ENCODE measurements at regions of chr17 and their contacts with region 1.

Region 1: GRCh38 chr17:55533608-55534007 is 22.4 kb upstream of the SMIM36 start:
- DNase-seq: no peak
- ATAC-seq: no peak
- H3K4me3 ChIP-seq: no peak overlapping the region
- H3K27ac ChIP-seq: no peak overlapping the region
- H3K4me1 ChIP-seq: no peaks in the 10 kb centered on the region
- H3K27me3 ChIP-seq: peaks cover 0 to 11% (median 0%) of the 10 kb centered on the region in 7 donors
- CTCF ChIP-seq: no peak

Region 2: DNA sequence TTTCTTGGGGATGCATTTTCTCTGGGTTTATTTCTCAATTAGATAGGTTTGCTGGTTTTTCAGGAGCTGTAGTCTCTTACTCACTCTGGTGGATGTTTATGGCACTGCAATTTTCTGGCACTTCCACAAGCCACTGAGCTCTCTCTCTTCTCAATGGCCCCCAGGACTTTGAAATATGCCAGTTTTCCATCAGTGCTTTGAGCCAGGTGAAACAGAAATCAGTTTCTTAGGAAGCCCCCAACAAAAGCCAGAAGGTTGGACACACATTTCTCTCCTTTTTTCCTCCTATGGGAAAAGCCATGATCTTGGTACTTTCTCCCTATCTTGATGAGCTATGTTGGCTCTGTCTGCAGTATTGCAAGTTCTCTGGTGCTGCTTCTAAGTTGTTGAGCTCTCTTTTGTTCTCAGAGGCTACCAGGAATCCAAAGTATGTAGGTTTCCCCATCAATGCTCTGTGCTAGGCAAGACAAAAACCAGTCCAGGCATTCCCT is 68.3 kb after region 1 on chr17:
- intact Hi-C with region 1: loop called in 3 of 10 experiments (anchors 5 to 10 kb)
- DNase-seq: no peak
- ATAC-seq: no peak
- H3K4me3 ChIP-seq: no peak overlapping the region
- H3K27ac ChIP-seq: no peak overlapping the region
- H3K4me1 ChIP-seq: no peaks in the 10 kb centered on the region
- H3K27me3 ChIP-seq: peaks cover 0 to 8% (median 0%) of the 10 kb centered on the region in 7 donors
- CTCF ChIP-seq: peak in 8 of 9 donors; percentile 14 to 71 (median 50)

Region 3: DNA sequence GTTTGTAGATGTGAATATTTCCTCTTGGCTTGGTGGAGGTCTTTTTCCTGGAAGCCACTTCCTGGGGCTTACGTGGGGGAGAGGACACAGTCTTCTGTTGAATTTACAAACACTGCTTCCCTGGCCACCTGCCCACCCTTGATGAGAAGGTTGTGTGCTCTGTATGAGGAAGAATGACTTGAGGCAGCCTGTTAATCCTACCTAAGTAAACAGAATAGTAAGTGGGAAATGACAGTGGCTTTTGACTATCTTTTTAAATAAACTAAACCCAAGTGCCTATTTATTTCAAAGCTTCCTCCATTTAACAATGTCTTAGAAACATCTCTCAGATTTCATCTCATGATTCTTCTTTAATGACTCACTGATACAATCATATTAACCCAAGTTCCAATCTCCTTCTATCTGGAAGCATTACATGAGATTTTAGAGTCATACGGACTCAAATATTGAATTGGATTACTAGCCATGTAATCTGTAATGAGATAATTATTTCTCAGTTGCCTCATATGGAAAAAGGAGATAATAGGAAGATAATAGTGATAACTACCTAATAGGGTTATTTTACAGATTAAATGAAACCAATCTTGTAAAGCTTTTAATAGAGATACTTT is 74.2 kb after region 1 on chr17:
- intact Hi-C with region 1: loop called in 2 of 10 experiments (anchors 5 to 10 kb)
- DNase-seq: peak; percentile 40 to 50
- ATAC-seq: peak in 3 of 8 donors; percentile 65 to 74 (median 65)
- H3K4me3 ChIP-seq: no peak overlapping the region
- H3K27ac ChIP-seq: no peak overlapping the region
- H3K4me1 ChIP-seq: peaks cover 0 to 20% (median 8%) of the 10 kb centered on the region in 9 donors
- H3K27me3 ChIP-seq: peaks cover 0 to 8% (median 0%) of the 10 kb centered on the region in 7 donors
- CTCF ChIP-seq: no peak

Region 4: DNA sequence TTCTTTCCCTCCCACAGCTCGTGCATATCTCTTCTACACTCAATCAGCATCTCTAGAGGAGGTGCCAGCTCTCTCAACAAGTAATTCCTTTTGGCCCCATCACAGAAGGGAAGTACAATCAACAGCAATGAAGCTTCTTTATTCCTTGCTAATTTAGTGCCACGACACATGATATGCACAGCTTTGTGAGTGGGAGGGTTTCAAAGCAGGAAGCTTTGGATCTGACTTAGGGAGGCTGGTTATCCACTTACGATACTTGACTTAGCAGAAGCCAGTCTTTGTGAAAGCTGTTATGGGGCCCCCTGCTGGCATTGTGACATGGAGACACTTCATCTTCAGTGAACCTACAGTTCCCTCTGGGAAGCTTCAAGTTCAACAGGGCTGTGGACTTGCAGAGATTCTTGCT is 108.1 kb after region 1 on chr17:
- intact Hi-C with region 1: loop called in 6 of 10 experiments (anchors 5 to 10 kb)
- DNase-seq: peak; percentile 48 to 75
- ATAC-seq: peak in 7 of 8 donors; percentile 58 to 88 (median 80)
- H3K4me3 ChIP-seq: no peak overlapping the region
- H3K27ac ChIP-seq: no peak overlapping the region
- H3K4me1 ChIP-seq: peaks cover 0 to 12% (median 0%) of the 10 kb centered on the region in 9 donors
- H3K27me3 ChIP-seq: peaks cover 0 to 79% (median 10%) of the 10 kb centered on the region in 7 donors
- CTCF ChIP-seq: peak; percentile 35 to 76 (median 65)

Measured in heart right ventricle (tissue), 16 donors.